WTC11 (cell line): ENCODE measurements at regions of chr1 and their contacts with region 1.

Region 1: GRCh38 chr1:203340112-203340804 is 10.7 kb downstream of the FMOD start:
- DNase-seq: peak; percentile 75
- ATAC-seq: peak; percentile 73
- H3K4me3 Mint-ChIP-seq: no peak overlapping the region
- H3K27ac Mint-ChIP-seq: no peak overlapping the region
- H3K4me1 Mint-ChIP-seq: peaks cover 31% of the 10 kb centered on the region
- H3K27me3 Mint-ChIP-seq: 0 out of 2 replicates have a peak, but pooled peaks cover 5% of the 10 kb centered on the region
- CTCF ChIP-seq: peak; percentile 75

Region 2: GRCh38 chr1:203273206-203273868 is 66.9 kb before region 1 on chr1:
- CTCF ChIA-PET with region 1: interaction called, 121 read pairs
- POLR2A ChIA-PET with region 1: interaction called, 5 read pairs
- DNase-seq: peak; percentile 90
- ATAC-seq: peak; percentile 70
- H3K4me3 Mint-ChIP-seq: peak overlapping the region; percentile 59
- H3K27ac Mint-ChIP-seq: no peak overlapping the region
- H3K4me1 Mint-ChIP-seq: peaks cover 13% of the 10 kb centered on the region
- H3K27me3 Mint-ChIP-seq: peaks cover 47% of the 10 kb centered on the region
- CTCF ChIP-seq: peak; percentile 97

Region 3: GRCh38 chr1:203326830-203327683 is 13.2 kb before region 1 on chr1:
- CTCF ChIA-PET with region 1: interaction called, 23 read pairs
- POLR2A ChIA-PET with region 1: interaction called, 3 read pairs
- DNase-seq: peak; percentile 91
- ATAC-seq: peak; percentile 85
- H3K4me3 Mint-ChIP-seq: peak overlapping the region; percentile 69
- H3K27ac Mint-ChIP-seq: no peak overlapping the region
- H3K4me1 Mint-ChIP-seq: peaks cover 50% of the 10 kb centered on the region
- H3K27me3 Mint-ChIP-seq: peaks cover 62% of the 10 kb centered on the region
- CTCF ChIP-seq: no peak

Region 4: DNA sequence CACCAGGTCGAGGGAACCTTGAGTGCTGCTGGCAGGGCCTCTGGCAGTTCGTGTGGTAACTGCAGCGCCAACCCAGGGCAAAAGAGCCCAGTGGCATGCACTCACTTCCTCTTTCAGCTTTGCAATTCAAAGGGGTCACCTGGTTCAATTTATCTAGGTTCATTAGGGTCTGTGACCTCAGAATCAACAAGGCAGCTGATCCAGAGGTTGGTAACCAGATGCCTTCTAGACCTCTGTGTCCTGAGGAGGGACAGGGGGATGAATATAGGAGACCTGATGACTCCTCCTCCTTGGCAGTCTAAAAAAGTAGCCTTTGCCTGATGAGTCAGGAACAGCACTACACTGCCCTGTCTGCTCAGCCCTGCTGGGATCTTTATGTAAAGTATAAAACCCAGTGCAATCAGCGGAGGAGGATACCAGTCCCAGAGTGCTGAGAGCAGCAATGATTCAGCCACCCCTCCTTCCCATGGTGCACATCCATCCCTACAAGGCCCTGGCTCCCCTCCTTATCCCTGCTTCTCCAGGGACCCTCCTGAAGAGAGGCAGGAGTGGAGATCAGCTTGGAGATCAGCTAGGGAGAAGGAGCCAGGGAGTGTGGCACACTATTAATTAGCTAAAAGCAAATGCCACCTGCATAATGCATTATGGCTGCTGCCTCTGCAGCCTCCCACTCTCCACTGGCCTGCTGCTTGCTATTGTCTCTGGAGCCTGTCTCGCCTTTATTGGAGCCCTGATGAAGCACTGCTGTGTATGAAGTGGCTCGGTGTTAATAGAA is 21.9 kb after region 1 on chr1:
- CTCF ChIA-PET with region 1: interaction called, 16 read pairs
- POLR2A ChIA-PET with region 1: interaction called, 3 read pairs
- DNase-seq: no peak
- ATAC-seq: no peak; the same call in 1 of the 2 replicates
- H3K4me3 Mint-ChIP-seq: no peak overlapping the region
- H3K27ac Mint-ChIP-seq: no peak overlapping the region
- H3K4me1 Mint-ChIP-seq: peaks cover 7% of the 10 kb centered on the region; the same call in 1 of the 2 replicates
- H3K27me3 Mint-ChIP-seq: peaks cover 13% of the 10 kb centered on the region
- CTCF ChIP-seq: no peak

Region 5: GRCh38 chr1:203448521-203449061 is 108.3 kb after region 1 on chr1:
- CTCF ChIA-PET with region 1: interaction called, 48 read pairs
- POLR2A ChIA-PET with region 1: no interaction called
- DNase-seq: no peak
- ATAC-seq: peak; percentile 81
- H3K4me3 Mint-ChIP-seq: no peak overlapping the region
- H3K27ac Mint-ChIP-seq: no peak overlapping the region
- H3K4me1 Mint-ChIP-seq: peaks cover 16% of the 10 kb centered on the region
- H3K27me3 Mint-ChIP-seq: no peaks in the 10 kb centered on the region; the same call in none of the 2 replicates
- CTCF ChIP-seq: no peak

Region 6: GRCh38 chr1:203486618-203487370 is 146.5 kb after region 1 on chr1:
- CTCF ChIA-PET with region 1: interaction called, 89 read pairs
- POLR2A ChIA-PET with region 1: no interaction called
- DNase-seq: no peak
- ATAC-seq: no peak
- H3K4me3 Mint-ChIP-seq: peak overlapping the region; percentile 72
- H3K27ac Mint-ChIP-seq: peak overlapping the region; percentile 45
- H3K4me1 Mint-ChIP-seq: peaks cover 14% of the 10 kb centered on the region
- H3K27me3 Mint-ChIP-seq: peaks cover 7% of the 10 kb centered on the region; the same call in 1 of the 2 replicates
- CTCF ChIP-seq: no peak

Region 7: DNA sequence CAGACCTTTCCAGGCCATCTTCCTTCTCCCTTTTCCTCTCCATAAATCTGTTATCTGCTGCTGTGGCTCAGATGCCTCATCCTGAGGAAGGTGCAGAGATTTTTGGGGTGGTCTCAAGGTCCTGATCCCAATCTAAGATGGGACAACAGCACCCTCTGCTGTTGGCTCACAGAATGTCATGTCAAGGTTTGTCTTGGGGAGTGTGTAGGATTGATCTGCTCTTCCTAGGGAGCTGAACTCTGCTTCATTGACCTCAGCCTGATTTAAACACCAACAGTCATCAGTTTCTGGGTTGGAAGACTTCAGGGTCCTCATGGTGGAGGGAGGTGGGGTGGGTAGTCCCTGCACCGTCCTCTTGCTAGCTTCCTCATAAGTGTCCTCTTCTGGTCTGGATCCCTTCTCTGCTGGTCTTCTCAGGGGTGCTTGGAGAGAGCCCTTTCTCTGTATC is 361.9 kb after region 1 on chr1:
- CTCF ChIA-PET with region 1: interaction called, 14 read pairs
- POLR2A ChIA-PET with region 1: no interaction called
- DNase-seq: peak; percentile 84
- ATAC-seq: peak; percentile 93
- H3K4me3 Mint-ChIP-seq: no peak overlapping the region
- H3K27ac Mint-ChIP-seq: no peak overlapping the region
- H3K4me1 Mint-ChIP-seq: no peaks in the 10 kb centered on the region
- H3K27me3 Mint-ChIP-seq: no peaks in the 10 kb centered on the region
- CTCF ChIP-seq: peak; percentile 82

Region 8: DNA sequence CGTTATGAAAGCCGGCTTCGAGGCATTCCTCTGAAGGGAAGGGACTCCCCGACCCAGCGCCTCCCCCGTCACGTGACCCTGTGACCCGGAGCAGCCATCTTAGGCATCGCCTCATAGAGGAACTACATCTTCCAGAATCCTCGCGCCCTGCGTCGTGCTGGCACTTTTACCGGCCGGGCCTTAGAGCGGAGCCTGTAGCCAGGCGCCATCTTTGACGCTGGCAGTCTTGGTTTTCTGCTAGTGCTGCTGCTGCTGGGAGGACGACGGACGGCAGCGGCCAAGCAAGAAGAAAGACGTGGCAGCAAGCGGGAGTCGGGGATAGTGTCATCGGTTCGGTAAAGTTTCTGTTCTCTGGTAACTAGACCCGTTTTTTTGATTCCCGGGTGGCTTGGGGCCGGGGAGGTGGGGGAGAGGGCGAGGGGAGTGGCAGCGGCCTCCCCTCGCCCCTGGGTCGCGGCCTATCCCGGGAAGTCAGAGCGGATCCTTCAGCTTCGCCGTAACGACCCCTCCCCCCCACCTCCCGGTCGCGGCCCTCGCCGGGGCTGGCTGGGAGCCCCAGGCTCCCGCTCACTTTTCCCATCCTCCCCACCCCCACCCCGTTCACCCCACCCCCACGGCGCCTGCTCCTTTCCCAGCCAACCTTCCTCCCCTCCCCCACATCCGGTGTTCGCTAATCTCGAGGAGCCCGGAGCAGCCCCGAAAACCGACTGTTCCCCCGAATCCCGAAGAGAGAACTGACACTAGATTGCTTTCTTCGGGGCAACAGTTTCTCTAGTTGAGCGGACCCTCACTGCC is 455.4 kb after region 1 on chr1 and contains the starts of genes ZBED6 and ZC3H11A:
- CTCF ChIA-PET with region 1: no interaction called
- POLR2A ChIA-PET with region 1: no interaction called
- DNase-seq: peak; percentile 98
- ATAC-seq: peak; percentile 94
- H3K4me3 Mint-ChIP-seq: peak within 1 kb of the TSS; percentile 91
- H3K27ac Mint-ChIP-seq: peak within 1 kb of the TSS; percentile 99
- H3K4me1 Mint-ChIP-seq: peaks cover 44% of the 10 kb centered on the region
- H3K27me3 Mint-ChIP-seq: no peaks in the 10 kb centered on the region; the same call in 1 of the 2 replicates
- CTCF ChIP-seq: no peak
- total RNA-seq, gene ZBED6: 12.1 to 13.4 TPM (median 12.5 TPM) in 3 replicates
- total RNA-seq, gene ZC3H11A: 73.4 to 80.1 TPM (median 75.2 TPM) in 3 replicates